HCT116 (cell line): ENCODE measurements at regions of chr2 and their contacts with region 1.

Region 1: GRCh38 chr2:8681786-8682692 is at the start of gene ID2:
- DNase-seq: peak; percentile 97
- ATAC-seq: peak; percentile 57
- H3K4me3 ChIP-seq: peak within 1 kb of the TSS; percentile 79 to 80
- H3K27ac ChIP-seq: peak within 1 kb of the TSS; percentile 97
- H3K4me1 ChIP-seq: peaks cover 10 to 64% of the 10 kb centered on the region in 2 experiments
- H3K27me3 ChIP-seq: no peaks in the 10 kb centered on the region
- CTCF ChIP-seq: no peak
- POLR2A ChIP-seq: peak; percentile 98
- RAD21 ChIP-seq: no peak
- total RNA-seq, gene ID2: 112 TPM

Region 2: GRCh38 chr2:7427293-7428060 is 1254.6 kb before region 1 on chr2:
- CTCF ChIA-PET with region 1: interaction called, 7 read pairs
- POLR2A ChIA-PET with region 1: interaction called, 5 read pairs
- RAD21 ChIA-PET with region 1: no interaction called
- intact Hi-C with region 1: loop called (anchors 1 kb)
- DNase-seq: peak; percentile 38
- ATAC-seq: peak; percentile 73
- H3K4me3 ChIP-seq: no peak overlapping the region
- H3K27ac ChIP-seq: no peak overlapping the region
- H3K4me1 ChIP-seq: no peaks in the 10 kb centered on the region
- H3K27me3 ChIP-seq: peaks cover 29% of the 10 kb centered on the region
- CTCF ChIP-seq: peak; percentile 44 to 76 (median 56); a peak in 4 of 6 replicates
- POLR2A ChIP-seq: no peak
- RAD21 ChIP-seq: peak; percentile 81

Region 3: DNA sequence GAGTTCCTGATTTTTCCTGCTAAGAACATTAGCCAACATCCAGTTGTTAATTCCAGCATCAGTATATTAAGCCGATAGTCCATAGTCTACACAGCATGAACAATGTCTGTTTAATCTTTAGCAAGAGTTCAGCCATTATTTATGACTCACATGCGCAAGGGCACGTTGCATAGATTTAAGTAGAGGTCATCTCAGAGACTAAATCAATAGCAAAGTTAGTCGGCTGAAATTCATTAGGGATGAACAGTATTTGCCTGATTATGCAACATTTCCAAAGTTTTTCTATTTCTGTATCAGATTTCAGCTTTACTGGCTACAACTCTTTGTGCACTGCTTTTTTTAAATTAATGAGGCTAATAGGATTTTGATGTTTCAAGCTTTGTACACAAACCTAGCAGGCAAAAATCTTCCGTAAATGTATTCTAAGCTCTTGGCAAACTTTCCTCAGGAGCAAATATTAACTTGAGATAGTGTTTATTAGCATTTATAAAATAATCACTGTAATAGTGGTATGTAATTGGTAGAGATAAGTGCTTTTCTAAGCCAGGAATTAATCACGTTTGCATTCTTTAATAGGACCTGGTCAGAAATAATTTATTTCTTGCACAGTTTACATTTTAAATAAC is 578.8 kb before region 1 on chr2:
- CTCF ChIA-PET with region 1: no interaction called
- POLR2A ChIA-PET with region 1: no interaction called
- RAD21 ChIA-PET with region 1: no interaction called
- intact Hi-C with region 1: loop called (anchors 10 kb)
- DNase-seq: no peak
- ATAC-seq: no peak
- H3K4me3 ChIP-seq: no peak overlapping the region
- H3K27ac ChIP-seq: no peak overlapping the region
- H3K4me1 ChIP-seq: no peaks in the 10 kb centered on the region
- H3K27me3 ChIP-seq: peaks cover 24% of the 10 kb centered on the region
- CTCF ChIP-seq: no peak
- POLR2A ChIP-seq: no peak
- RAD21 ChIP-seq: no peak

Region 4: DNA sequence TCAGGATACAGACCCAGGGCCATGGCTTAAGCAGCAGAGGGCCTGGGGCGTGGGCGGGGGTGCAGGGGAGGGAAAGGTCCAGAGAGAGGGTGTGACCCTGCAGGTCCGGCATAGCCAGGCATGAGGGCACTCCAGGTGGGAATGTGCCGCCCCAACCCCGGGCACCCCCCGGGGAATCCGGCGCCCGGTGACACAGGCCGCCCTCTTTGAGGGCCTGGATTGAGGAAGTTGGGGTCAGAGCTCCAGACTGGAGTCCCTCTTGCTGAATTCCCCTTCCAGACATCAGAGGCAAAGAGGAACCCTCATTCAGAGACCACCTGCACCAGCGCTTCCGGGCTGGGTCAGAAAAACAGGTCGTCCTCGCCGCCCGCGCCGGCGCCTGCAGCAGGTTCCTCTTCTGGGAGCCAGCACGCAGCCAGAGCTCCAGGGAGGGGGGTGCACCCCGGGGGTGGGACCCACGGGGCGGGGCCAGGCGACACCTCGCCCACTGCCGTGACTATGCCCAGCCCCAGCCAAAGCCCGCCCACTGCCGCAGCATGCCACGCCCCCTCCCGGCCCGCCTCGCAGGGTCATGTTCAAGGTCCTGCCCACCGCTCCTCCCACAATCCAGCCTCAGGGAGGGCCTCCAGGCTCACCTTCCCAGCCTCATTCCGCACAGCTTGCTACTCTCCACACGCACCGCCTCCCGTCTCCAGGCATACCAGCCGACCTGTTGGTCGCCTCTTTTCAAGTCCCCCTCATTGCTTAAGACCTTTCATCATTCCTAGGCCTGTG is 98.5 kb before region 1 on chr2:
- CTCF ChIA-PET with region 1: no interaction called
- POLR2A ChIA-PET with region 1: interaction called, 20 read pairs
- RAD21 ChIA-PET with region 1: interaction called, 3 to 5 read pairs
- intact Hi-C with region 1: loop called (anchors 2 kb)
- DNase-seq: peak; percentile 89
- ATAC-seq: peak; percentile 98
- H3K4me3 ChIP-seq: peak overlapping the region; percentile 39 to 42
- H3K27ac ChIP-seq: peak overlapping the region; percentile 50
- H3K4me1 ChIP-seq: peaks cover 15 to 39% of the 10 kb centered on the region in 2 experiments
- H3K27me3 ChIP-seq: no peaks in the 10 kb centered on the region
- CTCF ChIP-seq: no peak
- POLR2A ChIP-seq: peak; percentile 70
- RAD21 ChIP-seq: no peak

Region 5: GRCh38 chr2:8644605-8645175 is 37.3 kb before region 1 on chr2:
- CTCF ChIA-PET with region 1: no interaction called
- POLR2A ChIA-PET with region 1: interaction called, 10 read pairs
- RAD21 ChIA-PET with region 1: no interaction called
- intact Hi-C with region 1: no loop called
- DNase-seq: no peak
- ATAC-seq: peak; percentile 90
- H3K4me3 ChIP-seq: no peak overlapping the region
- H3K27ac ChIP-seq: no peak overlapping the region; the same call in 1 of the 2 replicates
- H3K4me1 ChIP-seq: peaks cover 2 to 16% of the 10 kb centered on the region in 2 experiments; a peak in 3 of 4 replicates
- H3K27me3 ChIP-seq: no peaks in the 10 kb centered on the region
- CTCF ChIP-seq: peak; percentile 54 to 76 (median 60); a peak in 5 of 6 replicates
- POLR2A ChIP-seq: no peak
- RAD21 ChIP-seq: peak; percentile 66